GM10248 (cell line): ENCODE measurements at regions of chr1 and their contacts with region 1.

Region 1: DNA sequence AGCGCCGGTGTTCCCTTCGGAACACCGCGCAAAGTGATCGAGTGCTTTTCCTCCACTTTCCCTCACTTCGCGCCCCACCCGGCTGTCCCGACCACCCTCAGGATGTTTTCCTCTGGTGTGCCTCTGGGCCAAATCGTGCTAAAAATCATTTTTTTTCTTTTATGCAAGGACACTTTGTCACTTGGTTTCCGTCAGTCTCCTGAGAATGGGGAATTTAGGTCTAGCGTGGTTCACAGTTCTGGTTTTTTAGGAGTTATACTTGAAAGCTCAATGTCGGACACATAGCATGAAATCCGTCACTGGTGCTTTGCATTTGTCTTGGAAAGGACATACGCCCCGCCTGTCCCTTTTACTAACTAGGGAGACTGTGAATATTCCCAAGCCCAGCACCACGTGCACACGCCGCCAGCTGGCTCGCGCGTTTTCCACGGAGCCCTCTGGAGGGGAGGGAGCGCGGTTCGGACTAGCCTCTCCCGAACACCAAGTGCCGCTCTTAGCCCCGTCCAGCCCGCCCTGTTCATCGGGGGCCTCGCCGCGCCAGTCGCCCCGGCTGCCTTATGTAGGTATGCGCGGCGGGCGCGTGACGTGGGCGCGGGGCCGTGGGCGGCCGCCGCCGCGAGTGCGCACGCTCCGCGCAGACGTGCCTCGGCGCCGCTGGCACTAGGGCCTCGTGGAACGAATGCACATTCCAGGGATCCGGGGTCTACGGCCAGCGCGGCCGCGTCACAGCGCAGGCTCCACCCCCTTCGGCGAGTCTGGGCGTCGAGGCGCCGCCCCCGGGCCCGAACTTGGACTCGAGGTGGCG is 572 bp upstream of the IRF2BP2 start:
- DNase-seq: peak; percentile 90
- CTCF ChIP-seq: no peak

Region 2: GRCh38 chr1:234499119-234499942 is 111.2 kb before region 1 on chr1:
- CTCF ChIA-PET with region 1: interaction called, 10 read pairs
- POLR2A ChIA-PET with region 1: interaction called, 3 read pairs
- DNase-seq: peak; percentile 78
- CTCF ChIP-seq: peak; percentile 87

Region 3: DNA sequence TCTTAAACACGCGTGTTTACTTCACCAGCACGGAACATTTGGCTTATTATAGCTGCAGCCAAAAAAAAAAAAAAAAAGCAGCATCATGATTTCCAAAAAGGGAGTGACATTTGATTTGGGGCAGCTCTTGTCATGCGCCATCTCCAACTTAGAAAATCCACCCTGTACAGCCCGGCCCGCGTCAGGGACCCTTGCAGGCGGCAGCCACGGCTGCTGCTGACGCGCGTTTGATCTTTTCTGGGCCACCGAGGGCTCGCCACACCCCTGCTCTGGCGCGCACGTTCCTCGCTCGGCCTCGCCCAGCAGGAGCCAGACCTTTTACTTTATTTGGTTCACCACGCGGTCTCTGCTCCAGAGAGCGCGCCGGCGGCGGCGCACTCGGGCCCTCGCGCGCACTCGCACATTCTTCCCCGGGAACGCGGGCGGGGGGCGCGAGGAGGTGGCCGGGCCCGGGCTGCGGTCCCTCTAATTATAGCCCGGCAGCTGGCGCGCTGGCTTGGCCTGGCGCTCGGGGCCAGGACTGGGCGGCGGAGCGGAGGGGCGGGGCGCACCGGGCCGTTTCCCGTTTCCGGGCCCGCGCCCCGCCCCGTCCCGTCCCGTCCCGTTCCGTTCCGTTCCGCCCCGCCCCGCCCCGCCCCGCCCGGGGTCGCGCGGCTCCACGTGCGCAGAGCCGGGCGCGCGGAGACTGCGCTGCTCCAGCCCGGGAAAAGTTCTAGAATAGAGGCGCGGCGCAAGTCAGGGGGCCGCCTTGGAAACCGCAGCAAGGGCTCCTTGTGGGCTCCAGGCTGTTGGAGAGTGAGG is 10.7 kb before region 1 on chr1:
- CTCF ChIA-PET with region 1: interaction called, 4 read pairs
- POLR2A ChIA-PET with region 1: interaction called, 20 read pairs
- DNase-seq: peak; percentile 86
- CTCF ChIP-seq: peak; percentile 9

Region 4: GRCh38 chr1:234631721-234632125 is 21.2 kb after region 1 on chr1:
- CTCF ChIA-PET with region 1: interaction called, 14 read pairs
- POLR2A ChIA-PET with region 1: no interaction called
- DNase-seq: no peak
- CTCF ChIP-seq: no peak

Region 5: DNA sequence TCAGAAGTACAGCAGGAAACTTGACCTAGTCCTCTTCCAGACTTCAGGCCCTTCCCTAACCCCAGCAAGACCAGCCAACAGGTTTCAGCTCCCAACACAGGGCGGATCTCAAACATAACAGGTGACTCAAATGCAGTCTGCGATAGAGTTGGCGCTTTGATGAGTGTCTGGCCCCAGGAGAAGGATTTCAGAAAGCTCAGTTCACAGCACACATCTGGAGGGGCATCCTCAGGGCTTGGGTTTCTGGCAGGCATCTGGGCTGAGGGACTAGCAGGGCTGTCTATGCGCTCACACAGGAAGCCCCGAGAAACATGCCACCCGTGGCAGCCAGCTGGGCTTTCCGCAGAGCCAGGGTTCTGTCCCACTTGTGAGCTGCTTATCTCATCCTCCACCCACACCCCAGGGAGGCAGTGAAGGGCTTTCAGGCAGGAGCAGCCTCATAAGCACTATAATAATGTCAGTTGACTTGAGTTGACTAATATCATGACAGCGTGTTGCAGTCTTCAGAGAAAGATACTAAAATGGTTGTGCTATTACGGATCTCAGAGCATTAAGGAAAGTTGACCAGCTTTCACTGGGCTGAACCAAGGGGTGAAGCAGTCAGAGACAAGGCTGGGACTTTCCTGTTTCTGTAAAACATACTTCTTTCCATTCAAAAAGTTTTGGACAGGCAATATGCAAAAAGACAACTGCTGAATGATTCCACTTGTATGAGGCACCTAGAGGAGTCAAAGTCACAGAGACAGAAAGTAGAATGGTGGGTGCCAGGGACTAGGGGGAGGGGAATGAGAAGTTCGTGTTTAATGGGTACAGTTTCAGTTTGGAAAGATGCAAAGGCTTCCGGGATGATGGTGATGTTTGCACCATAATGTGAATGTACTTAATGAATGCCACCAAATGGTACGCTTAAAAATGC is 232.4 kb after region 1 on chr1:
- CTCF ChIA-PET with region 1: interaction called, 3 read pairs
- POLR2A ChIA-PET with region 1: interaction called, 17 read pairs
- DNase-seq: peak; percentile 74
- CTCF ChIP-seq: no peak